HEK293T (cell line): ENCODE measurements at regions of chrX and their contacts with region 1.

Region 1: GRCh38 chrX:100720301-100720700 is 11.6 kb downstream of the SYTL4 start:
- DNase-seq: no peak

Region 2: DNA sequence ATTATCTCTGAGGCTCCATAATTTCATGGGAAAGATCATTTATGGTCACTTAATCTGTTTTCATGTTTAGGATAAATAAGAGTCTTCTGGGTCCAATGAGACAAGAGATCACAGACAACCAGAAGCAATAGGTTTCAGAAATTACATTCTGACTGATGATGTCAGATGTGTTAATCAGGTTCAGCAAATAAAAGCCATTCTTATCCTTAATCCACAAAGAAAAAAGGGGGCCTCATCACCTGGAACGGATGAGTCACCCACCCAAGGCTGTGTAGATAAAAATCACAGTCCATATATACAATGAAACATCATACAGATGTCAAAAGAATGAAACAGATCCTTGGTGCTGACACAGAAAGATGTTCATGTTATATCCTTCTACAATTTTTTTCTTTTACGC is 25.0 kb before region 1 on chrX:
- CTCF ChIA-PET with region 1: no interaction called
- POLR2A ChIA-PET with region 1: no interaction called
- DNase-seq: no peak

Region 3: GRCh38 chrX:100731441-100732281 is 11.4 kb after region 1 on chrX and contains the start of gene SYTL4:
- CTCF ChIA-PET with region 1: interaction called, 11 read pairs
- POLR2A ChIA-PET with region 1: interaction called, 10 read pairs
- DNase-seq: peak; percentile 65